ENCODE measurements at regions of chr4 and their contacts with region 1.

Region 1: GRCh38 chr4:121151942-121152341 is 12.2 kb downstream of the TNIP3 start:
- DNase-seq: no peak
- ATAC-seq: no peak
- H3K4me3 ChIP-seq: no peak overlapping the region
- H3K4me3 Mint-ChIP-seq: peak overlapping the region; percentile 34
- H3K27ac ChIP-seq: no peak overlapping the region
- H3K27ac Mint-ChIP-seq: peak overlapping the region; percentile 69
- H3K4me1 ChIP-seq: peaks cover 29% of the 10 kb centered on the region
- H3K4me1 Mint-ChIP-seq: peaks cover 90% of the 10 kb centered on the region
- H3K27me3 ChIP-seq: no peaks in the 10 kb centered on the region
- H3K27me3 Mint-ChIP-seq: no peaks in the 10 kb centered on the region
- CTCF ChIP-seq: no peak

Region 2: GRCh38 chr4:121139533-121140222 is 12.3 kb before region 1 on chr4:
- CTCF ChIA-PET with region 1: no interaction called
- POLR2A ChIA-PET with region 1: interaction called, 5 read pairs
- intact Hi-C with region 1: loop called in 1 of 2 experiments (anchors 2 kb)
- DNase-seq: peak in 4 of 14 experiments; percentile 13 to 78 (median 46)
- ATAC-seq: peak; percentile 82
- H3K4me3 ChIP-seq: no peak overlapping the region
- H3K4me3 Mint-ChIP-seq: peak overlapping the region; percentile 17
- H3K27ac ChIP-seq: peak overlapping the region; percentile 53 to 58
- H3K27ac Mint-ChIP-seq: peak overlapping the region; percentile 85
- H3K4me1 ChIP-seq: peaks cover 25% of the 10 kb centered on the region
- H3K4me1 Mint-ChIP-seq: peaks cover 57% of the 10 kb centered on the region
- H3K27me3 ChIP-seq: no peaks in the 10 kb centered on the region
- H3K27me3 Mint-ChIP-seq: no peaks in the 10 kb centered on the region
- CTCF ChIP-seq: no peak

Region 3: GRCh38 chr4:121243485-121243884 is 91.5 kb after region 1 on chr4:
- CTCF ChIA-PET with region 1: no interaction called
- POLR2A ChIA-PET with region 1: no interaction called
- intact Hi-C with region 1: no loop called
- DNase-seq: peak in 1 of 14 experiments; percentile 24
- ATAC-seq: peak; percentile 52
- H3K4me3 ChIP-seq: peak overlapping the region; percentile 49
- H3K4me3 Mint-ChIP-seq: peak overlapping the region; percentile 85
- H3K27ac ChIP-seq: no peak overlapping the region
- H3K27ac Mint-ChIP-seq: peak overlapping the region; percentile 4
- H3K4me1 ChIP-seq: no peaks in the 10 kb centered on the region
- H3K4me1 Mint-ChIP-seq: peaks cover 26% of the 10 kb centered on the region
- H3K27me3 ChIP-seq: no peaks in the 10 kb centered on the region
- H3K27me3 Mint-ChIP-seq: no peaks in the 10 kb centered on the region
- CTCF ChIP-seq: no peak

Measured in CD4-positive, alpha-beta T cell (primary cell).